Motor neuron (in vitro differentiated cells): ENCODE measurements at regions of chr11 and their contacts with region 1.

Region 1: DNA sequence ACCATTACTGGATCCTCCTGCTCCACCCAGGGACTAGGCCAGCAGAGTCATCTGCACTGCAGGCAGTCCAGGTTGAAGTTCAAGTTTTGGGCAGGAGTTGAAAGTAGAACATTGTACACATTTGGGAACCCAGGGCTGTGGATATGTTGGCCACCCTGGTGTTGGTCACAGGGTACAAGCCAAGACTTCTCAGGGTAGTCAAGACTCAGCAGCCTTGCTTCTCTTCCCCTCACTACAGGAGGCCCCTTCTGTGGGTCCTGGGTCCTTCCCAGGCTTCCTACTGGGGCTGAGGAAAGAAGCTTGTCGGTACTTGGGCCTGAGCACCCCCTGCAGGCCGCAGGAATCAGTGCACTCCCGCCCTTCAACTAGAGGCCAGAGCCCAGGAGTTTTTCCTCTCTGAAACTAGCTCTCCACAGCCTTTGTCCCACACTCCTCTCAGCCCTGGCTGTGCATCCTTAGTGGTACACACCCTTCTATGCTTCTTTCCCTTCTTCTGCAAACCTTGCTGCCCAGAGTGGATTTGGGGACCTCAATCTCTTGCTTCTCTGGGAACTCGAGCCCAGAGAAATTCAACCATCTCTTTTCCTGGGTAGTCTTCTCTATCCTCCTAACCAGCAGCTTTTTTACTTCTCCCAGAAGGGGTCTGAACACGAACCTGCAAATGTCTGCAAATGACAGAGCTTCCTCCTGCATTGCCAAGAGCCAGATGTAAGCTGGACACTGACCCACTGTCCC is 2.6 kb upstream of the HPX start:
- ATAC-seq: peak; percentile 82 to 93 (median 86)
- H3K4me3 ChIP-seq: no peak overlapping the region
- H3K27ac ChIP-seq: no peak overlapping the region
- H3K4me1 ChIP-seq: no peaks in the 10 kb centered on the region

Region 2: DNA sequence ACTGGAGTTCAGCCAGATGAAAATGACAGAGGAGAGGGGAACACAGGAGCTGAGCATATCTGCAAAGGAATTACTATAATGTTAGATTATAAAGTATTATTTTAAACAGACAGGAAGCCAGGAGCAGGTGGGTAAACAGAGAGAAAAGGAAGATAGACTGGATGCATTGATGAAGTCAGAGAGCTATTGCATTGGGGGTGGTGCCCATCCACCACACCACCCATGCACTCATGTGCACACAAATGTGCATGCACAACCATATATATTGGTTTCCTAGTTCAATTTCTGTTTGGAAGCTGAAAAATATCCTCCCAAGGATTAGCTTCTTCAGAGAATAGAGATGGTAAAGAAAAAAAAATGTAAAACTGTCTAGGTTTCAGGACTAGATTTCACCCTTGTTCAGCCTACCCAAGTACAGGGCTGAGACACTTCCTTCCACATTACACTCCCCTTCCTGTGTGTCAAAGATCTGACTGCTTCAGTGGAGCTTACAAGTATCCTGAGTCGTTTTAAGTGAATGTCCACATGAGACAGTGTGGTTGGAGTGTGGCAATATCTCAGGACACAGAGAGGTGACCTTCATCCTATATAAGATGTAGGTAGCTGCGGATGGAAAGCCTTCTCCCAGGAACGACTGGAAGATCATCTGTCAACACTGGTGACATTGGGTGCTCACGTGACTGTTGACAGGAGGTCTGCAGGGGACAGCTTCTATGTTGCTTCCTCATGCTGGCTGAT is 65.4 kb before region 1 on chr11:
- in situ Hi-C with region 1: loop called in 1 of 9 experiments (anchors 5 kb)
- ATAC-seq: peak in 4 of 8 experiments; percentile 13 to 37 (median 16)
- H3K4me3 ChIP-seq: no peak overlapping the region
- H3K27ac ChIP-seq: no peak overlapping the region
- H3K4me1 ChIP-seq: peaks cover 0 to 2% of the 10 kb centered on the region in 2 donors

Region 3: DNA sequence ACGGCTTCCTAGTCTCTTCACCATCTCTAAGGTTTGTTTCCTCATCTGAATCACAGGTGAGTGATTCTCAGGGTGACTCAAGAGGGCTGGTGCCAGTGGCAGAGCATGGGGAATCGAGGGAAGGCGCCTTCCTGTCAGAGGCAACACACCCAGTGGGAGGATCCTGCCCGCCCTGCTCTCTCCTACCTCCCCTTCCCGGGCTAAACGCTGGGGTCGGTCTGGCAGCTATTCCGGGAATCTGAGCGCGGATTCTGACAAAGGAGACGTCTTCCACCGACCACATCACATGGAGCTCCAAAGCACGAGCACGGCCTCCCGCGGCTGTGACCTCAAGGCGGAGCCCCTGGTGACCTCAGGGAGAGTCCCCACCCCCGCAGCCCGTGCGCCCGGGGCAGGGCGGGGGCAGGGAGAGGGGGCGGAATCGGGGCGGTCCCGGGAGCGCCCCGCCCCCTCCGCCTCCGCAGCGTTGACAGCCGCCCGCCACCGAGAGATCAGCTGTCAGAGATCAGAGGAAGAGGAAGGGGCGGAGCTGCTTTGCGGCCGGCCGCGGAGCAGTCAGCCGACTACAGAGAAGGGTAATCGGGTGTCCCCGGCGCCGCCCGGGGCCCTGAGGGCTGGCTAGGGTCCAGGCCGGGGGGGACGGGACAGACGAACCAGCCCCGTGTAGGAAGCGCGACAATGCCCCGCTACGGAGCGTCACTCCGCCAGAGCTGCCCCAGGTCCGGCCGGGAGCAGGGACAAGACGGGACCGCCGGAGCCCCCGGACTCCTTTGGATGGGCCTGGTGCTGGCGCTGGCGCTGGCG is 53.3 kb before region 1 on chr11 and contains the start of gene SMPD1:
- in situ Hi-C with region 1: no loop called
- ATAC-seq: peak; percentile 85 to 94 (median 90)
- H3K4me3 ChIP-seq: peak within 1 kb of the TSS; percentile 66 to 87 (median 69)
- H3K27ac ChIP-seq: peak within 1 kb of the TSS; percentile 57 to 74
- H3K4me1 ChIP-seq: peaks cover 17 to 18% of the 10 kb centered on the region in 2 donors
- total RNA-seq, gene SMPD1: 14.4 to 75.1 (median 21.0) TPM

Region 4: DNA sequence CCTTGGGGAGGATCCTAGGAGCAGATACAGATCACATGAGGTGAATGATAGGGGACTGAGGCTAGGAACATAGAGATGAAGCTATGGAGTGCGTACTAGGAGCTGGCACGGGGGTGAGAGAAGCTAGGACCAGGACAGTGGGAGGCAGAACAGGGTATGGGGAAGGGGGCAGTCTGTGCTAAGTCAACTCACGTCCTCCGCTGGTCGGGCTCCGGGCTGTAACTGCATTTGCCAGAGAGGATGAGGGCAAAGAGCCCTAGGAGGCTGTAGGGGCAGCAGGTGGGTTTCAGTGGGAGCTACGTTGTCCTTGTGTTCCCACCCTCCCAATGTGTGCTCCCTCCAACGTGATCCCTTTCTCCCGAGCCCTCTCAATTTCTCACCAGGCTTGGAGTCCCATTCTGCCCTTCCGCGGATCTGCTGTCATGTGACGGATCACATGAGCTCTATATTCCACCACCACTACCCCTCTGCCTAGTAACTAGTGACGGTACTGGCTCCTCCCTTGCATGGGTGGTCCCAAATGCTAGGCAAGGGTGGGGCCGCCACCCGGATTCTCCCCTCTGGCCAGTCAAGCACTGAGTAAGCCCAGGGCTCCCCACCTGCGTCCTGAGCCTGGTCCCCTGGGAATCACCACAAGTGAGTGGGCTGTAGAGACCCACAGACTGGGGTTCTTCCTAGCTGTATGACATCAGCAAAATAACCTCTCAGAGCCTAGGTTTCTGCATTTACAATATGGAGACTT is 175.7 kb after region 1 on chr11 and contains the start of gene TPP1:
- in situ Hi-C with region 1: no loop called
- ATAC-seq: peak; percentile 84 to 97 (median 96)
- H3K4me3 ChIP-seq: peak within 1 kb of the TSS; percentile 58 to 82 (median 65)
- H3K27ac ChIP-seq: peak within 1 kb of the TSS in 1 of 2 donors; percentile 73
- H3K4me1 ChIP-seq: peaks cover 9 to 10% of the 10 kb centered on the region in 2 donors
- total RNA-seq, gene TPP1: 5.2 to 174 (median 23.3) TPM